CD4-positive, alpha-beta memory T cell (primary cell): ENCODE measurements at regions of chrX and their contacts with region 1.

Region 1: GRCh38 chrX:79138658-79139241 is 5.7 kb upstream of the GPR174 start:
- DNase-seq: peak in 1 of 5 donors; percentile 24
- H3K4me3 ChIP-seq: no peak overlapping the region
- H3K4me3 Mint-ChIP-seq: peak overlapping the region; percentile 24 to 73 (median 48)
- H3K27ac ChIP-seq: peak overlapping the region; percentile 49
- H3K27ac Mint-ChIP-seq: peak overlapping the region; percentile 32 to 89 (median 84)
- H3K4me1 ChIP-seq: peaks cover 52% of the 10 kb centered on the region
- H3K4me1 Mint-ChIP-seq: peaks cover 22 to 59% (median 41%) of the 10 kb centered on the region in 4 donors
- H3K27me3 ChIP-seq: no peaks in the 10 kb centered on the region
- H3K27me3 Mint-ChIP-seq: no peaks in the 10 kb centered on the region

Region 2: DNA sequence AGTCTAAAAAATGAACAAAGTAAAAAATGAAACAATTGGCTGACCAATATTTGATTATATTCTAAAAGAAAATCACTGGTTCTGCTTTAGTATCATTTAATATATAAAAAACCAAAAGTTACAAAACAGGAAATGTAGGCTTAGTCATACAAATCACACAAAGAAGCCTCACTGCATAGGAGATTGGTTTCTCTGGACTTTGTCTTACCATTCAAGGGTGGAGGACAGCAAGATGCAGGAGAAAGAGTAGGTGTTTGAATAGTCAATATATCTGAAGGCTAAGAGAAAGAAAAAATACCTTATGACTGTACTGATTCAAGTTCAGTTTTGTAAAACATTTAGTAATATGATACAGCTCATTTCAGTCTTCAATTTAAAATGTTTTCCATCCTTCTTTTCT is 970.7 kb before region 1 on chrX:
- CTCF ChIA-PET with region 1: no interaction called
- POLR2A ChIA-PET with region 1: no interaction called
- intact Hi-C with region 1: no loop called
- DNase-seq: no peak
- H3K4me3 ChIP-seq: no peak overlapping the region
- H3K4me3 Mint-ChIP-seq: no peak overlapping the region
- H3K27ac ChIP-seq: no peak overlapping the region
- H3K27ac Mint-ChIP-seq: peak overlapping the region in 2 of 7 donors; percentile 6 to 29
- H3K4me1 ChIP-seq: no peaks in the 10 kb centered on the region
- H3K4me1 Mint-ChIP-seq: peaks cover 0 to 3% (median under 1%) of the 10 kb centered on the region in 4 donors
- H3K27me3 ChIP-seq: no peaks in the 10 kb centered on the region
- H3K27me3 Mint-ChIP-seq: no peaks in the 10 kb centered on the region

Region 3: DNA sequence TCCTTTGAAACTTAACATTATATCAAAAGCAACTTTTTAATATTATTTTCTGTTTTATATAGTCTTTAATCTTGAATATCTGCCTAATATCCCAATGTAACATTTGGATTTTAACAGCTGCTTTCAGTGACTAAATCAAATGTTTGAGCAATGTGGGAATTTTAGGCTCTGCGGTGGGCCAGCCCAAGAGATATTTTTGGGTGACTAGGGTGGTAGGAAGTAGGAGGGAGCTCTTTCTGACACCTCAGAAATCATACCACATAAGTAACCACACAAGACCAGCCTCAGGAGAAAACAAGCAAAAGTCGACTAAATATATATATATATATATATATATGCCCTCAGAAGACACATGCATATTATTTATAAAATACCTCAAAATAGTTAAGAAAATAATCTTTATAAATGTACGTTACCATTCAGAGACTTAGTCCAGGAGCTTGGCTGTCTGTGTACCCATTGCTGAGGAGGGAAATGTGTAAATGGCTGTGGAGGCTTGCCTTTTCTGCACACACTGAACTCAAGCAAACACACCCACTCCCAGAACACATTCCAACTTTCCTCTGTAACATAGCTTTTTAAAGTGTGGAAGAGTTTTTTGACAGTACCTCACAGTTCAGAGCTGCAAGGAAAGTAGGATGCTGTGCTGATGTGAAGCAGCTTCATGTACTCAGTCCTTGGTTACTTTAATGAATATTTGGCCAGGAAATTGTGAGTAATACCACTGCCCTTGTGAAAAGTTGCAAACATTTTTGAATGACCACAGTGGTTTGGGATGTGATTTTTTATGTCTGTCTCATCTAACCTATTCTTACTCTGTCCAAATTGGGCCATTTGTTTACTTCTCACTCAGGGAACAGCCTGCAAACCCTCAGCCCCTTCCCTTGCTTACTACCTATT is 479.7 kb before region 1 on chrX and contains the start of gene RTL3:
- CTCF ChIA-PET with region 1: no interaction called
- POLR2A ChIA-PET with region 1: no interaction called
- intact Hi-C with region 1: no loop called
- DNase-seq: no peak
- H3K4me3 ChIP-seq: no peak within 1 kb of the TSS
- H3K4me3 Mint-ChIP-seq: peak within 1 kb of the TSS in 3 of 8 donors; percentile 15 to 59 (median 52)
- H3K27ac ChIP-seq: no peak within 1 kb of the TSS
- H3K27ac Mint-ChIP-seq: no peak within 1 kb of the TSS
- H3K4me1 ChIP-seq: peaks cover 4% of the 10 kb centered on the region
- H3K4me1 Mint-ChIP-seq: peaks cover 2 to 11% (median 5%) of the 10 kb centered on the region in 4 donors
- H3K27me3 ChIP-seq: no peaks in the 10 kb centered on the region
- H3K27me3 Mint-ChIP-seq: no peaks in the 10 kb centered on the region
- total RNA-seq, gene RTL3: not detected

Region 4: GRCh38 chrX:78964598-78964997 is 174.2 kb before region 1 on chrX:
- CTCF ChIA-PET with region 1: no interaction called
- POLR2A ChIA-PET with region 1: no interaction called
- intact Hi-C with region 1: loop called (anchors 5 kb)
- DNase-seq: no peak
- H3K4me3 ChIP-seq: no peak overlapping the region
- H3K4me3 Mint-ChIP-seq: peak overlapping the region in 1 of 8 donors; percentile 50
- H3K27ac ChIP-seq: no peak overlapping the region
- H3K27ac Mint-ChIP-seq: peak overlapping the region in 6 of 7 donors; percentile 52 to 85 (median 78)
- H3K4me1 ChIP-seq: peaks cover 21% of the 10 kb centered on the region
- H3K4me1 Mint-ChIP-seq: peaks cover 13 to 42% (median 25%) of the 10 kb centered on the region in 4 donors
- H3K27me3 ChIP-seq: no peaks in the 10 kb centered on the region
- H3K27me3 Mint-ChIP-seq: no peaks in the 10 kb centered on the region

Region 5: DNA sequence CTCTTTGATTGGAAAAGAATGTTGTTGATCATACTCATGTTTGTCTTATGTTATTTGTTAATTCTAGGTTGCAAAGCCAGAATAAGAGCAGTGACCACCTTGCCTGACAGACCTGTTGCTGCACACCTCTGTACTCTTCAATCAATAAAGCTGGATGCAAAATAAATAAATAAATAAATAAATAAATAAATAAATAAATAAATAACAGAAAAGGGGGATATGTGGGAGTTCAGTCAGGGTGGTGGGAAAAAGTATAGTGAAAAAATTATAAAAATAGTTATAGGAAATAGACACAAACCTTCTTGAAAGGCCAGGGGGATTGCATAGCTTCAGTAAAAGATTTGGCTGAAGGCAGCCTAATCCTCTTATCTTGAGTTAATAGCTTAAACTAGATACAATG is 1332.8 kb after region 1 on chrX:
- CTCF ChIA-PET with region 1: no interaction called
- POLR2A ChIA-PET with region 1: no interaction called
- intact Hi-C with region 1: no loop called
- DNase-seq: no peak
- H3K4me3 ChIP-seq: no peak overlapping the region
- H3K4me3 Mint-ChIP-seq: no peak overlapping the region
- H3K27ac ChIP-seq: no peak overlapping the region
- H3K27ac Mint-ChIP-seq: no peak overlapping the region
- H3K4me1 ChIP-seq: no peaks in the 10 kb centered on the region
- H3K4me1 Mint-ChIP-seq: no peaks in the 10 kb centered on the region
- H3K27me3 ChIP-seq: no peaks in the 10 kb centered on the region
- H3K27me3 Mint-ChIP-seq: no peaks in the 10 kb centered on the region